BJ (cell line): ENCODE measurements at regions of chr10 and their contacts with region 1.

Region 1: GRCh38 chr10:13414894-13415293 is 66.8 kb upstream of the SEPHS1 start:
- DNase-seq: no peak
- H3K4me3 ChIP-seq: no peak overlapping the region
- H3K27me3 ChIP-seq: peaks cover 3% of the 10 kb centered on the region
- CTCF ChIP-seq: peak; percentile 45

Region 2: GRCh38 chr10:13536674-13537366 is 121.9 kb after region 1 on chr10:
- CTCF ChIA-PET with region 1: interaction called, 16 read pairs
- POLR2A ChIA-PET with region 1: no interaction called
- DNase-seq: no peak
- H3K4me3 ChIP-seq: no peak overlapping the region
- H3K27me3 ChIP-seq: peaks cover 8% of the 10 kb centered on the region
- CTCF ChIP-seq: peak; percentile 75